Activated CD4-positive, alpha-beta T cell treated with anti-CD3 and anti-CD28 coated beads, Interleukin-2, amount 10 ng/mL, durations not matched to agents 7 days and 5 days (primary cell): ENCODE measurements at regions of chr1 and their contacts with region 1.

Region 1: DNA sequence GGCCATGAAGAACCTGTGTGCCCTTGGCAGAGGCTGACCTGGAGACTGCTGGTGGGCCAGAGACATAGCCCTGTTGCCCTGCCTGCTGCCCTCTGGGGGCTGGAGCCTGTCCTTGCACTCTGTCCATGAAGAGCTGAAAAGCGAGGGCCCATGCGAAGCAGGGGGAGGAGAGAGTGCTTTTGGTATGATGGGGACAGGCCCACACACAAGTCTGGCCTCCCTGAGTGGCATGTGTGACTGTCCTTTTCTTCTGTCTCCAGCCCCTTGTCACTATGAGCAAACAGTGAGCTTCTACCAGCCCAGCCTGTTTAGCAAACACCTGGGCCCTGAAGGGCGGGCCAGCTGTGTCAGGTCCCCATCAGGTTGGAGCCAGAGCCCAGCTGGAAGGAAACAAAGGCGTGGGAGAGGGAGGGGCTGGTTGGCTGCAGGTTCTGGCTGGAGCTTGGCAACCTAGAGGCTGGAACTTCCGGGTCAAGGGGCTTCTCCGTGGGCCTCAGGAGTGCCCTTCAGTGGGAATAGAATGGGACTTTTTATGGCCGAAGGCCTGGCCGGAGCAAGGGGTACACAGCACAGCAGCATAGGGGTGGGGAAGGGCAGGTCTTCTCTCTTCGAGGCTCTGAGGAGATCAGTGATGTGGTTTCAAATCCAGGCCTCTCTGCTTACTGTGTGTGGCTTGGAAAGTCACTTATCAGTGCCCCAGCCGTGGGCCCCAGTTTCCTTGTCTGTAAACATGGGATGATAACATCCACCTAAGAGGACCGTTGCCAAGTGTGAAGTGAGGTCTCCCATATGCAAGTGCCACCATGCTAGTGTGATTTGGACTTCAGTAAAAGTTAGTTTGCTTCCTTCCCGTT is 14.3 kb downstream of the QSOX1 start:
- DNase-seq: peak; percentile 20
- H3K4me3 Mint-ChIP-seq: no peak overlapping the region
- H3K27ac Mint-ChIP-seq: no peak overlapping the region
- H3K4me1 Mint-ChIP-seq: peaks cover 5% of the 10 kb centered on the region
- H3K27me3 Mint-ChIP-seq: no peaks in the 10 kb centered on the region

Region 2: GRCh38 chr1:180157576-180158057 is 11.4 kb before region 1 on chr1:
- CTCF ChIA-PET with region 1: interaction called, 13 read pairs
- POLR2A ChIA-PET with region 1: no interaction called
- DNase-seq: no peak
- H3K4me3 Mint-ChIP-seq: no peak overlapping the region
- H3K27ac Mint-ChIP-seq: no peak overlapping the region
- H3K4me1 Mint-ChIP-seq: peaks cover 26% of the 10 kb centered on the region
- H3K27me3 Mint-ChIP-seq: no peaks in the 10 kb centered on the region